OCI-LY7 (cell line): ENCODE measurements at regions of chr16 and their contacts with region 1.

Region 1: GRCh38 chr16:8936421-8936820 is 27.3 kb downstream of the USP7 start:
- DNase-seq: peak; percentile 66
- H3K4me3 ChIP-seq: no peak overlapping the region
- H3K27ac ChIP-seq: no peak overlapping the region
- H3K4me1 ChIP-seq: peaks cover 10% of the 10 kb centered on the region
- CTCF ChIP-seq: peak; percentile 82

Region 2: GRCh38 chr16:8868416-8869211 is 67.8 kb before region 1 on chr16 and contains the start of gene CARHSP1:
- CTCF ChIA-PET with region 1: no interaction called
- POLR2A ChIA-PET with region 1: no interaction called
- intact Hi-C with region 1: loop called (anchors 5 kb)
- DNase-seq: peak; percentile 94
- H3K4me3 ChIP-seq: peak within 1 kb of the TSS; percentile 92
- H3K27ac ChIP-seq: peak within 1 kb of the TSS; percentile 89
- H3K4me1 ChIP-seq: peaks cover 63% of the 10 kb centered on the region
- CTCF ChIP-seq: no peak
- total RNA-seq, gene CARHSP1: 236 and 241 TPM in 2 replicates

Region 3: GRCh38 chr16:8963825-8964441 is 27.5 kb after region 1 on chr16 and contains the start of gene USP7:
- CTCF ChIA-PET with region 1: no interaction called
- POLR2A ChIA-PET with region 1: no interaction called
- intact Hi-C with region 1: loop called (anchors 2 kb)
- DNase-seq: peak; percentile 94
- H3K4me3 ChIP-seq: peak within 1 kb of the TSS; percentile 84
- H3K27ac ChIP-seq: peak within 1 kb of the TSS; percentile 67
- H3K4me1 ChIP-seq: peaks cover 38% of the 10 kb centered on the region
- CTCF ChIP-seq: no peak
- total RNA-seq, gene USP7: 46.4 and 61.5 TPM in 2 replicates

Region 4: GRCh38 chr16:8996891-8997290 is 60.5 kb after region 1 on chr16:
- CTCF ChIA-PET with region 1: no interaction called
- POLR2A ChIA-PET with region 1: no interaction called
- intact Hi-C with region 1: no loop called
- DNase-seq: no peak
- H3K4me3 ChIP-seq: no peak overlapping the region
- H3K27ac ChIP-seq: no peak overlapping the region
- H3K4me1 ChIP-seq: no peaks in the 10 kb centered on the region
- CTCF ChIP-seq: no peak

Region 5: GRCh38 chr16:9008601-9009260 is 72.3 kb after region 1 on chr16:
- CTCF ChIA-PET with region 1: interaction called, 11 read pairs
- POLR2A ChIA-PET with region 1: interaction called, 3 read pairs
- intact Hi-C with region 1: loop called (anchors 1 kb)
- DNase-seq: peak; percentile 68
- H3K4me3 ChIP-seq: no peak overlapping the region
- H3K27ac ChIP-seq: no peak overlapping the region
- H3K4me1 ChIP-seq: no peaks in the 10 kb centered on the region
- CTCF ChIP-seq: peak; percentile 86